BJ (cell line): ENCODE measurements at regions of chr1 and their contacts with region 1.

Region 1: DNA sequence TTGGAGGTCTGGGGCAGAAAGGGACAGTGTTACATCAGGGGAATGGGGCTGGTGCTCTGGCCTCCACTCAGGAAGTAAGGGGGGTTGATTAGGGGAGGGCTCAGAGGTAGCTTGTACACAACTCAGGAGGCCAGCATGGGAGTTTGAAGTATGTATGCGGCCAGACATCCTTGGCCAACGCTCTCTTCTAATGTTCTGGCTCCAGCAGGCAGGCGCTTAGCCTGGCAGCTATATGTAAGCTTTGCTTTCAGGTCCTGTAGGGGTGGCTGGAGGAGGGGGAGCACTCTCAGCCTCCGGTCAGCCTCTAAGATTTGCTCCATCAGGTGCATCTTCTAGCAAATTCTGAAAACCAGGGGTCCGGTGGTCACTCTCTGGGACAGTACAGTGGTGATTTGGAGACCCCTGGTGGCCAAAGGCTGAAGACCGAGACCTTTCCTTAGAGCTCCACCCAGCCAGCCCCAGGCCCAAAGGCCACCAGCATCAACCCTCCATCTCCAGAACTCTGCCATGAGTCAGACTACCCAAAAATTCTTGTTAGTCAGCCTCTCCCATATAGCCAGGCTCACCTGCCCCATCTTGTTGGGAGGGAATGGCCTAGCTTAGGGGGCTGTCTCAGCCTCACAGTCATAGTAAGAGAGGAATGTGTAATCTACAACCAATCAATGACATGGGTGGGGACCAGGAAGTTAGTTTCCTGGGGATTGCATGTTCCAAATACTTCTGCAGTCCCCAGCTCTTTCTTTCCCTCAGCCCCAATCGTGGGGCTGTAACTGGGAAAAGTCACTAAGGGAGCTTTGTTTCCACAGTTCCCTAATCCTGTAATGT is 9.7 kb upstream of the COL8A2 start:
- DNase-seq: no peak
- H3K4me3 ChIP-seq: no peak overlapping the region
- H3K27me3 ChIP-seq: no peaks in the 10 kb centered on the region
- CTCF ChIP-seq: peak; percentile 79

Region 2: GRCh38 chr1:36088575-36089443 is 45.9 kb before region 1 on chr1 and contains the start of gene ADPRS:
- CTCF ChIA-PET with region 1: interaction called, 382 read pairs
- POLR2A ChIA-PET with region 1: no interaction called
- DNase-seq: no peak
- H3K4me3 ChIP-seq: peak within 1 kb of the TSS; percentile 96
- H3K27me3 ChIP-seq: no peaks in the 10 kb centered on the region
- CTCF ChIP-seq: peak; percentile 85
- polyA plus RNA-seq, gene ADPRS: 30.0 and 46.4 TPM in 2 replicates

Region 3: GRCh38 chr1:36099681-36100341 is 34.9 kb before region 1 on chr1:
- CTCF ChIA-PET with region 1: interaction called, 382 read pairs
- POLR2A ChIA-PET with region 1: interaction called, 3 read pairs
- DNase-seq: no peak
- H3K4me3 ChIP-seq: no peak overlapping the region
- H3K27me3 ChIP-seq: no peaks in the 10 kb centered on the region
- CTCF ChIP-seq: peak; percentile 79

Region 4: GRCh38 chr1:36115200-36115669 is 19.5 kb before region 1 on chr1:
- CTCF ChIA-PET with region 1: interaction called, 382 read pairs
- POLR2A ChIA-PET with region 1: no interaction called
- DNase-seq: peak; percentile 85
- H3K4me3 ChIP-seq: no peak overlapping the region
- H3K27me3 ChIP-seq: no peaks in the 10 kb centered on the region
- CTCF ChIP-seq: no peak